Breast epithelium (tissue), 4 donors: ENCODE measurements at regions of chr17 and their contacts with region 1.

Region 1: DNA sequence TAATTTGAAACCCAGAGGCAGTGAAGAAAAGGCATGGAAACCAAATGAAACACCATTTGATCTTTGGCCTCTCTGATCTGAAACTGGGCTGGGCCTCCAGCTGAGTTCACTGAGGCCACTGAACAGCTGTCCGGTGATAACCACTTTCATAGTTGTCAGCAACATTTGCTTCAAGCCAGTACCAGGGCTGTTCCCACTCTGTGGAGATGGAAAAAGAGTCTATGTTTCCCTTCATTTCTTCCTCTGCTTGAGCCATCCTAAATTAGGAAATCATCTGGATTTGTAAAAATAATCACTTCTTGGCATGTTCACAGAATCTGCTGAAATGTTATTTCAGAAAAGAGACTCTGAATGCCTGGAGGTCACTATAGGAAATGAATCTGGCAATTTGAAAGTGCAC is 119.3 kb downstream of the STX8 start:
- DNase-seq: no peak
- H3K4me3 ChIP-seq: no peak overlapping the region
- H3K27ac ChIP-seq: no peak overlapping the region
- H3K4me1 ChIP-seq: no peaks in the 10 kb centered on the region
- H3K27me3 ChIP-seq: no peaks in the 10 kb centered on the region
- CTCF ChIP-seq: no peak
- POLR2A ChIP-seq: no peak

Region 2: GRCh38 chr17:8745586-8746500 is 710.5 kb before region 1 on chr17:
- intact Hi-C with region 1: no loop called
- DNase-seq: peak in 1 of 2 donors; percentile 30
- H3K4me3 ChIP-seq: peak overlapping the region; percentile 56 to 66 (median 63)
- H3K27ac ChIP-seq: no peak overlapping the region
- H3K4me1 ChIP-seq: no peaks in the 10 kb centered on the region
- H3K27me3 ChIP-seq: no peaks in the 10 kb centered on the region
- CTCF ChIP-seq: peak; percentile 73 to 77 (median 75)
- POLR2A ChIP-seq: no peak

Region 3: GRCh38 chr17:9498490-9498889 is 42.2 kb after region 1 on chr17:
- intact Hi-C with region 1: loop called (anchors 2 kb)
- DNase-seq: no peak
- H3K4me3 ChIP-seq: no peak overlapping the region
- H3K27ac ChIP-seq: no peak overlapping the region
- H3K4me1 ChIP-seq: no peaks in the 10 kb centered on the region
- H3K27me3 ChIP-seq: no peaks in the 10 kb centered on the region
- CTCF ChIP-seq: no peak
- POLR2A ChIP-seq: no peak

Region 4: DNA sequence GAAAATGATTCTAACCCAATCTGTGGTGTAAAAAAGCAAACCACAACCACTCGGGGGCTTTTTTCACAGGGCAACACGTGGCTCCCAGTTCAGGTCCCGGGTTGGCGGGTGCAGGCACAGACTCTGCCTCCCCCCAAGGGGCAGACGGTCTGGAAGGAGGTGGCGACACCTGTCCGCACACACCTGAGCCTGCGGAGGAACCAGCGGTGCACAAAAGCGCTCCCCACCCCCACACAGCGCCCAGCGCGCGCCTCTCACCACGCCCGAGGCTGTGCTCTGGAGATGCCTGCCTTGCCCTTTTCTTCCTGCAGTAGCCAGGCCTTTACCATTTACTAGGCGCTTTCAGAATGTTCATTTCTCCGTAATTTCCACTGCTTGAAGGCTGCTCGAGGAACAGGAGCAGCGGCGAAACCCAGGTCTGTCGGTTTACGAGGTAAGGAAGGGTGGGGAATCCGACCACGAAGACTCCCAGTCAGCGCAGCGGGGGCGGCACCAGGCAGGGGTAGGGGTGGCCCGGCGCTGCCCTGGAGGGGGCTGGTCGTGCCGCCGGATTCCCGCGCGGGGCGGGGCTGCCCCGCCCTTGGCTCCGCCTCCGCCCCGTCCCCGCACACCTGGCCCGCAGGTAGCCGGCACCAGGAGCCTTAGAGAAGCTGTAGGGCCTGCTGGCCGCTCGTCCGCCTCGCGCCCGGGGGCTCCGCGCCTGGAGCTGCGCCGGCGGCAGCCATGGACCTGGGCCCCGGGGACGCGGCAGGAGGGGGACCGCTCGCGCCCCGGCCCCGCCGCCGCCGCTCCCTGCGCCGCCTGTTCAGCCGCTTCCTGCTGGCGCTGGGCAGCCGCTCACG is 188.8 kb after region 1 on chr17 and contains the start of gene USP43:
- intact Hi-C with region 1: no loop called
- DNase-seq: peak; percentile 27 to 59
- H3K4me3 ChIP-seq: peak within 1 kb of the TSS; percentile 33 to 72 (median 68)
- H3K27ac ChIP-seq: peak within 1 kb of the TSS; percentile 86 to 87
- H3K4me1 ChIP-seq: no peaks in the 10 kb centered on the region
- H3K27me3 ChIP-seq: no peaks in the 10 kb centered on the region
- CTCF ChIP-seq: no peak
- POLR2A ChIP-seq: no peak
- total RNA-seq, gene USP43: 0.32 to 6.1 (median 3.9) TPM